H1 (cell line): ENCODE measurements at regions of chr19 and their contacts with region 1.

Region 1: DNA sequence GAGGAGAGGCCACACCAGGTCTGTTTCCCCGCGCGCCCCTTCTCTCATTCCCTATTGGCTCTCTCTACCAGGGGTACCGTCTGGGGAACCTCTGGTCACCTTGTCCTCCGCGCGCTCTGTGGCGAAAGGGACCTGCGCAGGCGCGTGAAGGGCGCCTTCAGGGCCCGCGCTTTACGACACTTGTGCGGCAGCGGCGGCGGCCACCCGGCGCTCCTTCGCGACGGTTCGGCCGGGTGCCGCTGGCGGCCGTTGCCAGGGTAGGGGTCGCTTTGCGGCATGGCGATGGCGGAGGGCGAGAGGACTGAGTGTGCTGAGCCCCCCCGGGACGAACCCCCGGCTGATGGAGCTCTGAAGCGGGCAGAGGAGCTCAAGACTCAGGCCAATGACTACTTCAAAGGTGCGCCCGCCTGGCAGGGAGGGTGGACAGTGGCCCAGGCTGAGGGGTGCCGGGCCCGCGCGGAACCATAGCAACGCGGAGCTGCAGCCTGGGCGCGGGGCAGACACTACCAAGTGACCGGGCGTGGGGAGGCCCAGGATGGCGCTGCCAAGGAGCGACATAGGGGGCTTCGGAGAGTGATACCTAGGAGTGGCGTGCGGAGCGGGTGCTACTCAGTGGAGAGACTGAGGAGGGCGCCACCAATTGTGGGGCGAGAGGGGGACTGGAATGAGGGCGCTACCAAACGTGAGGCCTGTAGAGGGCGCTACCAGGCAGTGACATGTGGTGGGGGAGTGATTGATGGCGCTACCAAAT is at the start of gene PPP5C:
- DNase-seq: peak; percentile 78 to 92
- H3K4me3 ChIP-seq: peak within 1 kb of the TSS; percentile 70 to 95 (median 84)
- H3K27ac ChIP-seq: peak within 1 kb of the TSS; percentile 91
- H3K4me1 ChIP-seq: peaks cover 3 to 16% (median 5%) of the 10 kb centered on the region in 4 experiments
- H3K27me3 ChIP-seq: no peaks in the 10 kb centered on the region
- CTCF ChIP-seq: peak; percentile 99
- EP300 ChIP-seq: no peak
- POLR2A ChIP-seq: peak; percentile 79 to 82
- RAD21 ChIP-seq: peak; percentile 43 to 62
- total RNA-seq, gene PPP5C: 105 and 112 TPM in 2 replicates

Region 2: GRCh38 chr19:46317339-46317738 is 29.7 kb before region 1 on chr19:
- CTCF ChIA-PET with region 1: no interaction called
- POLR2A ChIA-PET with region 1: no interaction called
- DNase-seq: no peak
- H3K4me3 ChIP-seq: no peak overlapping the region
- H3K27ac ChIP-seq: no peak overlapping the region
- H3K4me1 ChIP-seq: no peaks in the 10 kb centered on the region
- H3K27me3 ChIP-seq: no peaks in the 10 kb centered on the region
- CTCF ChIP-seq: no peak
- EP300 ChIP-seq: no peak
- POLR2A ChIP-seq: no peak
- RAD21 ChIP-seq: no peak

Region 3: GRCh38 chr19:46328079-46328478 is 18.9 kb before region 1 on chr19:
- CTCF ChIA-PET with region 1: interaction called, 5 read pairs
- POLR2A ChIA-PET with region 1: interaction called, 13 read pairs
- DNase-seq: no peak
- H3K4me3 ChIP-seq: no peak overlapping the region
- H3K27ac ChIP-seq: no peak overlapping the region
- H3K4me1 ChIP-seq: no peaks in the 10 kb centered on the region
- H3K27me3 ChIP-seq: no peaks in the 10 kb centered on the region
- CTCF ChIP-seq: no peak
- EP300 ChIP-seq: no peak
- POLR2A ChIP-seq: no peak
- RAD21 ChIP-seq: no peak

Region 4: GRCh38 chr19:46368116-46368515 is 21.1 kb after region 1 on chr19:
- CTCF ChIA-PET with region 1: interaction called, 58 read pairs
- POLR2A ChIA-PET with region 1: interaction called, 11 read pairs
- DNase-seq: no peak
- H3K4me3 ChIP-seq: no peak overlapping the region
- H3K27ac ChIP-seq: no peak overlapping the region
- H3K4me1 ChIP-seq: peaks cover 5 to 16% (median 9%) of the 10 kb centered on the region in 4 experiments
- H3K27me3 ChIP-seq: no peaks in the 10 kb centered on the region
- CTCF ChIP-seq: no peak
- EP300 ChIP-seq: no peak
- POLR2A ChIP-seq: no peak
- RAD21 ChIP-seq: no peak

Region 5: GRCh38 chr19:46373421-46374359 is 26.7 kb after region 1 on chr19:
- CTCF ChIA-PET with region 1: interaction called, 58 read pairs
- POLR2A ChIA-PET with region 1: interaction called, 8 read pairs
- DNase-seq: peak; percentile 62 to 73
- H3K4me3 ChIP-seq: peak overlapping the region in 3 of 4 experiments; percentile 5 to 42 (median 19); a peak in 5 of 8 replicates
- H3K27ac ChIP-seq: peak overlapping the region; percentile 84
- H3K4me1 ChIP-seq: peaks cover 14 to 30% (median 21%) of the 10 kb centered on the region in 4 experiments
- H3K27me3 ChIP-seq: no peaks in the 10 kb centered on the region
- CTCF ChIP-seq: peak in 1 of 3 experiments; percentile 17; a peak in 1 of 4 replicates
- EP300 ChIP-seq: no peak
- POLR2A ChIP-seq: peak in 1 of 2 experiments; percentile 51; a peak in 1 of 3 replicates
- RAD21 ChIP-seq: no peak

Region 6: GRCh38 chr19:46426506-46427162 is 79.6 kb after region 1 on chr19:
- CTCF ChIA-PET with region 1: no interaction called
- POLR2A ChIA-PET with region 1: no interaction called
- DNase-seq: peak in 1 of 2 experiments; percentile 91
- H3K4me3 ChIP-seq: peak overlapping the region; percentile 69 to 84 (median 78)
- H3K27ac ChIP-seq: no peak overlapping the region
- H3K4me1 ChIP-seq: peaks cover 3 to 6% (median 5%) of the 10 kb centered on the region in 4 experiments; a peak in 6 of 7 replicates
- H3K27me3 ChIP-seq: peaks cover 0 to 20% (median 15%) of the 10 kb centered on the region in 4 experiments; a peak in 5 of 7 replicates
- CTCF ChIP-seq: no peak
- EP300 ChIP-seq: no peak
- POLR2A ChIP-seq: no peak
- RAD21 ChIP-seq: no peak

Region 7: GRCh38 chr19:46579361-46579879 is 232.4 kb after region 1 on chr19:
- CTCF ChIA-PET with region 1: no interaction called
- POLR2A ChIA-PET with region 1: no interaction called
- DNase-seq: peak in 1 of 2 experiments; percentile 82
- H3K4me3 ChIP-seq: no peak overlapping the region
- H3K27ac ChIP-seq: no peak overlapping the region
- H3K4me1 ChIP-seq: no peaks in the 10 kb centered on the region; a peak in 1 of 7 replicates
- H3K27me3 ChIP-seq: no peaks in the 10 kb centered on the region; a peak in 1 of 7 replicates
- CTCF ChIP-seq: peak; percentile 64 to 76 (median 71)
- EP300 ChIP-seq: no peak
- POLR2A ChIP-seq: no peak
- RAD21 ChIP-seq: peak; percentile 18 to 36; a peak in 3 of 4 replicates